Heart right ventricle (tissue), 16 donors: ENCODE measurements at regions of chr15 and their contacts with region 1.

Region 1: GRCh38 chr15:39580117-39580484 is 778 bp upstream of the THBS1 start:
- DNase-seq: peak; percentile 92 to 95
- ATAC-seq: peak; percentile 62 to 91 (median 85)
- H3K4me3 ChIP-seq: peak overlapping the region; percentile 19 to 88 (median 67)
- H3K27ac ChIP-seq: peak overlapping the region; percentile 83 to 97 (median 92)
- H3K4me1 ChIP-seq: peaks cover 2 to 62% (median 41%) of the 10 kb centered on the region in 9 donors
- H3K27me3 ChIP-seq: peaks cover 0 to 7% (median 0%) of the 10 kb centered on the region in 7 donors
- CTCF ChIP-seq: peak; percentile 88 to 99 (median 98)

Region 2: DNA sequence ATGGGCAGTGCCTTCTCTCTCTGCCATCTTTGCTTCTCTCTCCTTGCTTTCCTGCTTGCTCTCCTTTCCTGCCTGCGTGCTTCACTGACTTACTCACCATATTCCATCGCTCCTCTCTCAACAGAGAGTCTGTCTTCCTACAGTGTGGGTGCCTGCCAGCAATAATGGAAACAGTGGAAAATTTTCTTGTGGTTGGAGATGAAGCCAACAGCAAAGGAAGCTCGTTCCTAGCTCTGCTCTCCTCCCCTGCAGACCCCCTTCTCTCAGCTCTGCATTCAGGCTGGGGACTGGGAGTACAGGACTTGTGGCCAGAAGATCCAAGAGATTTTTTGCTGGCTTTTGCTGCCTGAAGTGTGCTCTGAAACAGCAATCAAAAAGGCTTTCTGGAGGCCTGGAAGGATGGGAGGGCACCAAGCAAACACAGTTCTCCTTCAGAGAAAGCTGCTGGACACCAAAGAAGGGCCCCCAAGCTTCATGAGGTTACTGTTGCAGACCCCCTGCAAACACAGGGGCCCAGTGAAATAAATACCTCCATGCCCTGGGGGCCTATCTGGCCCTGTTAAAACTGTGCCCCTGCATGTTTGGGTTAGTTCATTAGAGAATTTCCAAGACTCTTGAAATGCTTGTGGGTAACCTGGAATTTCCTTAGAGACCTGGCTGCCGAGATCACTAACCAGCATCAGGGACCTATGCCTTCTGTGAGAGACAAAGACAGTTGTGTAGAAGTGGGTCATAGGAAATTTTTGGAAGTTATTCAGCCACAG is 865.6 kb before region 1 on chr15:
- intact Hi-C with region 1: loop called in 5 of 10 experiments (anchors 5 to 10 kb)
- DNase-seq: no peak
- ATAC-seq: no peak
- H3K4me3 ChIP-seq: no peak overlapping the region
- H3K27ac ChIP-seq: no peak overlapping the region
- H3K4me1 ChIP-seq: no peaks in the 10 kb centered on the region
- H3K27me3 ChIP-seq: no peaks in the 10 kb centered on the region
- CTCF ChIP-seq: no peak

Region 3: DNA sequence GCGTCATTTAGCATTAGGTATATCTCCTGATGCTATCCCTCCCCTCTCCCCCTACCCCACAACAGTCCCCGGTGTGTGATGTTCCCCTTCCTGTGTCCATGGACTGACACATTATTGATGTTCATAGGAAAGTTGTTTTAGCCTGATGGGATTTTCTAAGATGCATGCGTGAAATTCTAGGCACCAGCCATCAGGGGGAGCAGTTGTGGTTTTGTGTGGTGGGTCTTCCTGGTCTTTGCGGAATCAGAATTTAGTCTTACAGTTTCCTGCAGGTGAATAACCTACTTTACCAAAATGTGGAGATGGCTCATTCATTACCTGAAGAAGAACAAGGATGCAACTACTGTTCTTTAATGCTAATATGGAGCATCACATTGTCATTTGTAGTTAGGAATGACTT is 454.2 kb before region 1 on chr15:
- intact Hi-C with region 1: loop called in 2 of 10 experiments (anchors 5 kb)
- DNase-seq: no peak
- ATAC-seq: no peak
- H3K4me3 ChIP-seq: no peak overlapping the region
- H3K27ac ChIP-seq: no peak overlapping the region
- H3K4me1 ChIP-seq: peaks cover 3 to 40% (median 23%) of the 10 kb centered on the region in 9 donors
- H3K27me3 ChIP-seq: no peaks in the 10 kb centered on the region
- CTCF ChIP-seq: peak; percentile 24 to 66 (median 59)

Region 4: GRCh38 chr15:39358441-39359041 is 221.6 kb before region 1 on chr15:
- intact Hi-C with region 1: loop called in 1 of 10 experiments (anchors 2 kb)
- DNase-seq: peak in 1 of 2 donors; percentile 54
- ATAC-seq: peak; percentile 83 to 93 (median 90)
- H3K4me3 ChIP-seq: no peak overlapping the region
- H3K27ac ChIP-seq: peak overlapping the region; percentile 49 to 83 (median 73)
- H3K4me1 ChIP-seq: peaks cover 5 to 35% (median 19%) of the 10 kb centered on the region in 9 donors
- H3K27me3 ChIP-seq: no peaks in the 10 kb centered on the region
- CTCF ChIP-seq: no peak

Region 5: DNA sequence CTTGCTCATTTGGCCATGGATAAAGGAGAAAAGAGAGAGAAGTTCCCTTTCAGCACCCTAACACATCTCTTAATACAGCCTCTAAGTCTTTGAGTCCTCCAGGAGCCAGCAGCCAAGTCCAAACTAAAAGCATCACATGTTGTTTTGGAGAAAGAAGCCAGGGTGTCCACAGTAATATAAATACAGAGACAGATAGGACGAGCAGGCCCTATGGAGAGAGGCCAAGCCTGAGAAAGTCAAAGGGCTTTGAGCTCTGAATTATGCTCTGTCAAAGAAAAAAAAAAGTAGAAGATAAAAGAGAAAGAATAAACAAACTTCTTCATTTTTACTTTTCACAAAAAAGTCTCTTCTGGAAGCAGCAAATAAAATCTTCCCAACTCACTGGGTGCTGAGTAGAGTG is 91.6 kb before region 1 on chr15:
- intact Hi-C with region 1: loop called in 2 of 10 experiments (anchors 5 kb)
- DNase-seq: peak in 1 of 2 donors; percentile 50
- ATAC-seq: peak; percentile 32 to 90 (median 73)
- H3K4me3 ChIP-seq: no peak overlapping the region
- H3K27ac ChIP-seq: peak overlapping the region in 9 of 10 donors; percentile 42 to 85 (median 76)
- H3K4me1 ChIP-seq: peaks cover 0 to 66% (median 40%) of the 10 kb centered on the region in 9 donors
- H3K27me3 ChIP-seq: no peaks in the 10 kb centered on the region
- CTCF ChIP-seq: no peak

Region 6: GRCh38 chr15:39511000-39511915 is 68.8 kb before region 1 on chr15:
- intact Hi-C with region 1: loop called in 3 of 10 experiments (anchors 5 to 10 kb)
- DNase-seq: peak; percentile 63 to 76
- ATAC-seq: peak; percentile 78 to 94 (median 86)
- H3K4me3 ChIP-seq: no peak overlapping the region
- H3K27ac ChIP-seq: peak overlapping the region in 8 of 10 donors; percentile 20 to 83 (median 72)
- H3K4me1 ChIP-seq: peaks cover 0 to 33% (median 25%) of the 10 kb centered on the region in 9 donors
- H3K27me3 ChIP-seq: no peaks in the 10 kb centered on the region
- CTCF ChIP-seq: no peak

Region 7: DNA sequence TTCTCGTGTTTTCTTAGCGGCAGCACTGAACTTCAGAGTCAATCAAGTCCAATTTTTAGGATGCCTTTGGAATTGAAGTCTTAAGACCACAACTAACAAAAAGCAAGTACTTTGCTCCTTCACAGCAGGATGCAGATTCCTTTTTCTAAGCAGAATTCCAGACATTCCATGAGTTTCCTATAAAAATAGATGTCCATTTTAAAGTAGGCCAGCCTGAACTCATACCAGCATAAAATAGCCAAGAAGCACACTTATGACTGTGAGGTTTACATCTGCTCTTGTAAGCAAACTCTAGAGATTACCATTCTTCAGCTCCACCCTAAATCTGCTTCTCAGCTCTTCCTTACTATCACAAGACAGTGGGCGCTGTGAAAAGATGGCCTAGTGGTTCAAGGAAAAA is 86.6 kb after region 1 on chr15:
- intact Hi-C with region 1: no loop called
- DNase-seq: no peak
- ATAC-seq: no peak
- H3K4me3 ChIP-seq: no peak overlapping the region
- H3K27ac ChIP-seq: no peak overlapping the region
- H3K4me1 ChIP-seq: peaks cover 0 to 15% (median 0%) of the 10 kb centered on the region in 9 donors
- H3K27me3 ChIP-seq: no peaks in the 10 kb centered on the region
- CTCF ChIP-seq: no peak